ENCODE measurements at regions of chr1 and their contacts with region 1.

Region 1: GRCh38 chr1:28877132-28877781 is 37.1 kb upstream of the EPB41 start:
- DNase-seq: peak; percentile 67 to 91 (median 78)
- H3K4me3 ChIP-seq: no peak overlapping the region
- H3K27ac ChIP-seq: no peak overlapping the region
- H3K4me1 ChIP-seq: no peaks in the 10 kb centered on the region
- H3K27me3 ChIP-seq: no peaks in the 10 kb centered on the region
- CTCF ChIP-seq: peak; percentile 84 to 94 (median 92)
- POLR2A ChIP-seq: no peak

Region 2: DNA sequence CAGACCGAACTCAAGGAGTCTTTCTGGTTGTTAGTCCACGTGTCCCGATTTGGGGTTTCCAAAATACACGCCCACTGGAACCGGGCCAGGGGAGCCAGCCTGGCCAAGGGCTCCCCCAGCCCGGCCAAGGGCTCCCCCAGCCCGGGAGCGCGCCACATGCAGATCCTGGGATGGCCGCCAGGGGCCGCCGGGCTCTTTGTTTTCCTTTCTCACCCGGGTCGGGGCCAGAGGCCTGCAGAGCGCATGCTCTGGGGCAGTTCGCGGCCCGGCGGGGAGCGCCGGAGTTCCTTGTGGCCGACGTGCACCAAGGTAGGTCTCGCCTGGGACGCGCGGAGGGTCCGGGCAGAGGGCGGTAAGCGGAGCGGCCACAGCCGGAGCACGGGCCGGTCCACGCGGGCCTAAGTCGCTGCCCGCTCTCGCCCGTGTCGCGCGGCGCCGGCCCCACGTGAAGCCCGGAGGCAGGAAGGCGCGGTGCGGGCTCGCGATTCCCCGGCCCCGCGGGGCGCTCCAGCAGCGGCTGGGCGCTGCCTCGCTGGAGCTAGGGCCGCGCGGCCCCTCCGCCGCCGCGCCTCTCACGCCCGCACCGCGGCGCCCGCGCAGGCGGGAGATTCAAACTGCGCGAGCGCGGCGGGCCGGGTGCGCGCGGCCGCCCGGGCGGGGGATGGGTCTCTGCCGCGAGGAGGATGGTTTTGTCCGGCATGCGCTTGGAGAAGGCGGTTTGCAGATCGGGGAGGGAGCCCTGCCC is 359.1 kb before region 1 on chr1:
- intact Hi-C with region 1: loop called in 1 of 2 experiments (anchors 5 kb)
- DNase-seq: peak; percentile 90 to 94 (median 91)
- H3K4me3 ChIP-seq: peak overlapping the region in 2 of 4 donors; percentile 33 to 82
- H3K27ac ChIP-seq: peak overlapping the region in 4 of 5 donors; percentile 57 to 92 (median 70)
- H3K4me1 ChIP-seq: peaks cover 6 to 14% of the 10 kb centered on the region in 2 donors
- H3K27me3 ChIP-seq: no peaks in the 10 kb centered on the region
- CTCF ChIP-seq: peak; percentile 95 to 99 (median 96)
- POLR2A ChIP-seq: peak; percentile 43 to 65

Region 3: GRCh38 chr1:28648474-28649198 is 228.6 kb before region 1 on chr1 and contains the start of gene RNU11:
- intact Hi-C with region 1: loop called (anchors 5 to 10 kb)
- DNase-seq: peak; percentile 81 to 98 (median 93)
- H3K4me3 ChIP-seq: peak within 1 kb of the TSS in 2 of 4 donors; percentile 33 to 51
- H3K27ac ChIP-seq: peak within 1 kb of the TSS; percentile 69 to 96 (median 87)
- H3K4me1 ChIP-seq: peaks cover 8 to 18% of the 10 kb centered on the region in 2 donors
- H3K27me3 ChIP-seq: no peaks in the 10 kb centered on the region
- CTCF ChIP-seq: no peak
- POLR2A ChIP-seq: peak; percentile 100
- total RNA-seq, gene RNU11: not detected

Region 4: DNA sequence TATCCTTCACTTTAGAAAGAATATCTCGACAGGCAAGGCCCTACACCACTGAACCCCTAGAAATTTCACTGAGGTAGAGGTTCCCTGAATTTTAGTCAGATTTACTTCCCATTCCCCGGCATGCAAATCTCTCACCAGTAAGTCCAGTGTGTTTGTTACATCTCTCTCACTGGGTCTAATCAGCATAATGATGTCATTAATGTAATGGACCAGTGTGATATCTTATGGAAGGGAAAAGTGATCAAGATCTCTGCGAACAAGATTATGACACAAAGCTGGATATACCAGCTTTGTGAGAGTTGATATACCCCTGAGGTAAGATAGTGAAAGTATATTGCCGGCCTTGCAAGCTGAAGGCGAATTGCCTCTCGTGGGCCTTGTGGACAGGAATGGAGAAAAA is 220.9 kb before region 1 on chr1:
- intact Hi-C with region 1: loop called (anchors 5 to 10 kb)
- DNase-seq: no peak
- H3K4me3 ChIP-seq: no peak overlapping the region
- H3K27ac ChIP-seq: no peak overlapping the region
- H3K4me1 ChIP-seq: no peaks in the 10 kb centered on the region
- H3K27me3 ChIP-seq: no peaks in the 10 kb centered on the region
- CTCF ChIP-seq: no peak
- POLR2A ChIP-seq: no peak

Region 5: DNA sequence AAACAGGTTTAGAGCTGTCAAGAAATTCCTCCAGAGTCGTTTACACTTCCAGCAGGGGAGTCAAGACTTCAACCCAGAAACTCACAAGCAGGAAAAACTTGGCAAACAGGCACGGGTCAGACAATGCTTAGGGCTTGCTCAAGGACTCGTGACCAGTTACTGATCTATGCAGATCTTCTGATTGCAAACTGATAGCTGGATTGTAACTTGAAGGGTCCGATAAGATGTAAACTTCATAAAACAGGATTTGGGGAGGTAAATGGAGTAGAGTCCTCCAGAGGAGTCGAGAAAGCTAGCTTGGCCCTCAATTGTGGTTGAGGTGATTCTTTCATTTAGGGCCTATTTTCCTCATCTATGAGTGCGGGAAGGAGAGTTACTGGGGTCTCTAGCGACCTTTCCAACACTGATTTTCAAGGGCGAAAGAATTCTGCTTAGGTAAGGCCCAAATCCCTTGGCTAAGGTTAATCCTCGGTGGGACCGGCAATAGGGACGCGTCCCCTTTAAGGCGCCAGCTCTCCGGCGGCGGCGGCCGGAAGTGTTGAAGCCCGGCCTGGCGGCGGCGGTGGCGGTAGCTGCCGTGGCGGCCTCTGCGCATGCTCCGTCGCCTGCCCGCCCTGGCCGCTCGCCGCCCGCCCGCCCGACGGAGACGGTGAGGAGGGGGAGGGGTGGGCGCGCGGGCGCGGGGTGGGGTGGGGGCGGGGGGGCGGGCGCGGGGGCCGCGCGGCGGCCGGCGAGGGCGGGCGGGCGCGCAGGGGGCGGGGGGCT is 208.9 kb before region 1 on chr1 and contains the start of gene GMEB1:
- intact Hi-C with region 1: no loop called
- DNase-seq: peak; percentile 85 to 91 (median 89)
- H3K4me3 ChIP-seq: peak within 1 kb of the TSS; percentile 27 to 99 (median 92)
- H3K27ac ChIP-seq: peak within 1 kb of the TSS; percentile 91 to 97 (median 93)
- H3K4me1 ChIP-seq: peaks cover 9 to 19% of the 10 kb centered on the region in 2 donors
- H3K27me3 ChIP-seq: no peaks in the 10 kb centered on the region
- CTCF ChIP-seq: peak in 1 of 6 experiments; percentile 34
- POLR2A ChIP-seq: peak in 1 of 2 donors; percentile 32
- total RNA-seq, gene GMEB1: 6.3 to 27.0 (median 10.0) TPM

Region 6: DNA sequence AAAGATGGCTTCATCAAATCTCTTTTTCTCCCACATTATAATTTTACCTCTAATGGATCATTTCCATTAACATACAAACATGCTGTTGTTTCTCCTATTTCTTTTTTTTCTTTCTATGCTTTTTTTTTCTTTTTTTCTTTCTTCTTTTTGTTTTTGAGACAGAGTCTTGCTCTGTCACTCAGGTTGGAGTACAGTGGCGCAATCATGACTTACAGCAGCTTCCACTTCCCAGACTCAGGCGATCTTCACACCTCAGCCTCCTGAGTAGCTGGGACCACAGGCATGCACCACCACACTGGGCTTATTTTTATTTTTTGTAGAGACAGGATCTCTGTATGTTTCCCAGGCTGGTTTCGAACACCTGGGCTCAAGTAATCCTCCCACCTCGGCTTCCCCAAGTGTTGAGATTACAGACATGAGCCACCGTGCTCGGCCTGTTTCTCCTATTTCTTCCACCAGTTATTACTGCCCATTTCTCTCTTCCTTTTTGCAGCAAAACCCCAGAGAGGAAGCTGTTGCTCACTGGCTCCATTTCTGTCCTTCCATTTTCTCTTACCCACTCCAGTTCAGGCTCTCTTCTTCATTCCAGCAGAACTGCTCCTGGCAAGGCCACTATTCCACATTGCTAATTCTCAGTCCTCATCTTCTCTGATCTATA is 97.4 kb before region 1 on chr1:
- intact Hi-C with region 1: loop called in 1 of 2 experiments (anchors 2 kb)
- DNase-seq: peak in 1 of 7 donors; percentile 13
- H3K4me3 ChIP-seq: no peak overlapping the region
- H3K27ac ChIP-seq: peak overlapping the region in 3 of 5 donors; percentile 11 to 68 (median 49)
- H3K4me1 ChIP-seq: peaks cover under 1 to 24% of the 10 kb centered on the region in 2 donors
- H3K27me3 ChIP-seq: no peaks in the 10 kb centered on the region
- CTCF ChIP-seq: no peak
- POLR2A ChIP-seq: no peak

Measured in adrenal gland (tissue), 19 donors.